Panc1 (cell line): ENCODE measurements at regions of chr13 and their contacts with region 1.

Region 1: GRCh38 chr13:74214321-74214720 is 80.1 kb upstream of the KLF12 start:
- DNase-seq: no peak
- ATAC-seq: no peak
- H3K4me3 ChIP-seq: no peak overlapping the region
- H3K27ac ChIP-seq: no peak overlapping the region
- H3K4me1 ChIP-seq: no peaks in the 10 kb centered on the region
- H3K27me3 ChIP-seq: no peaks in the 10 kb centered on the region
- CTCF ChIP-seq: no peak

Region 2: DNA sequence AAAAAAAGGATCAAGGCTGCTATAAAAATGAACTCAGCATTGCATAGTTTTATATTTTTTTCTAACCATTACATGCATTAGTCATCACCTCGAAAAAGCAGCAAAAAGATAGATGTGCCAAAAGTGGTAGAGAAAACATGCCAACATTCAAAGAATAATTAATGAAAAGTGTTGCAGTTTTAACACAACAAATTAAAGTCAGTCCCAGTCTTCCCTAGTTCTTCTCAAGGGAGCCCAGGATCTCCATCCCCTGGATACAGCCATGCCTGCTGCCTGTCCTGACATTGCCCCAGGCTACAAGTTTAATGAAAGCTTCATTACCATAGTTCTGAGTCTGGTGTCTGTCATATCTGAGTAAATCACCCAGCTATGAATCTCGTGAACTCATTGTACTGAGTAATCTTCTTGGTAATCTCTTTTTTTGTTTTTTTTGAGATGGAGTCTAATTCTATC is 36.4 kb after region 1 on chr13:
- CTCF ChIA-PET with region 1: interaction called, 10 read pairs
- POLR2A ChIA-PET with region 1: no interaction called
- in situ Hi-C with region 1: no loop called
- intact Hi-C with region 1: no loop called
- DNase-seq: no peak
- ATAC-seq: no peak
- H3K4me3 ChIP-seq: no peak overlapping the region
- H3K27ac ChIP-seq: no peak overlapping the region
- H3K4me1 ChIP-seq: no peaks in the 10 kb centered on the region
- H3K27me3 ChIP-seq: no peaks in the 10 kb centered on the region
- CTCF ChIP-seq: no peak